ENCODE measurements at regions of chr3 and their contacts with region 1.

Region 1: DNA sequence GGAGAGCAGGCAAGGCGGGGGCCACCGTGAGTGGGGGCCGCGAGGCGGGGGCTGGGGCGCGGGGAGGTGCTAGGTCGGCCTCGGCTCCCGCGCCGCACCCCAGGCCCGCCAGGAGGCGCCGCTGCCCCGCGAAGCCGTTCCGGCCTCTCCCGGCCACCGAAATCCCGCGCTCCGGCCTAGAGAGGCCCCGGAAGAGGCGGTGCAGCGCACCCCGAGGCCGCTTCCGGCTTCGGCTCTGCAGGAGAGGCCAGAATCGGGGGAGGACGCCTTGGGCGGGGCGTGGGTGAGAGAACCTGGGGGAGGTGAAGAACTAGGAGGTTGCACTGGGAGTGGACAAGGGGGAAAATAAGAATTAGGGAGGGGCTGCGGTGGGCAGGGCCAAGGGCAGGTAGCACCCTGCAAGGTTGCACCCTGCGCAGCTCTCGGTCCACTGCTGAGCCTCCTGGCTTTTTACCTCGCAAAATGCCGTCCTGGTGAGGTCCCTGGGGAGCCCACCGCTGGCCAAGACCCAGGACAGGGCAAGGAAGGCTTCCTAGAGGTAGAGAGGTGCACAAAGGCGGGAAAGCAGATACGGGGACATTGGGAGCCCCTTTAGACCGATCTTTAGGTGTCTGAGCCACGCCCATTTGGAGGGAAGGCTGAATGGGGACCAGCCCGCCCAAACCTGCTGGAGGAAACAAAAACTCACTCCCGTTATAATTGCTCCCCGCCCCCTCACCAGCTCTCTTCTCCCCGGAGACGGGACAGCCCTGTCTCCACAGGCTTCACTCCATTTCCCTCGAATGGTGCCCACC is 8.4 kb upstream of the GNAI2 start:
- DNase-seq: peak; percentile 88
- H3K27ac ChIP-seq: peak overlapping the region; percentile 94
- CTCF ChIP-seq: peak; percentile 94

Region 2: DNA sequence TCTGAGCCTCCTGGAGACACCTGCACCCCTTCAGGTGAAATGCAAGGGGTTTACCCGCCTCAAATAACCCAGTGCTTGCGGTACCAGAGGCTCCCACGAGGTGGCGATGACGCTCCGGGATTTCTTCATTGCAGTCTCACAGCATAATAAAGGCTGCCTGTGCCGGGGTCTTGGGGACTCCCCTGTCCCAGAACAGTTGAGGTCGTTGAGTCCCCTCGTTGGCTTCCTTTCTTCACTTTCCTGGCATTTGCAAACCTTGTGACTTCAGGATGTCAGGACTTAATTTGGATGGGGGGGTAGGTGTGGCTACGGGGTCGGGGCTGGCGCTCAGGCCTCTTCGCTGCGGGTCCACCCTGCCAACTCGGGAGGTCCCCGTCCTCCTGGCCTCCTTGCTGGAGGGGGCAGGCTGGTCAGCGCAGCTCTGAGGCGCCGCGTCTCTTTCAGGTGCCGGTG is 34.9 kb before region 1 on chr3:
- CTCF ChIA-PET with region 1: interaction called, 45 read pairs
- POLR2A ChIA-PET with region 1: no interaction called
- DNase-seq: peak; percentile 63
- H3K27ac ChIP-seq: no peak overlapping the region
- CTCF ChIP-seq: peak; percentile 92

Region 3: GRCh38 chr3:50245831-50246516 is 18.4 kb after region 1 on chr3:
- CTCF ChIA-PET with region 1: interaction called, 12 read pairs
- POLR2A ChIA-PET with region 1: no interaction called
- DNase-seq: peak; percentile 69
- H3K27ac ChIP-seq: peak overlapping the region; percentile 100
- CTCF ChIP-seq: peak; percentile 96

Region 4: DNA sequence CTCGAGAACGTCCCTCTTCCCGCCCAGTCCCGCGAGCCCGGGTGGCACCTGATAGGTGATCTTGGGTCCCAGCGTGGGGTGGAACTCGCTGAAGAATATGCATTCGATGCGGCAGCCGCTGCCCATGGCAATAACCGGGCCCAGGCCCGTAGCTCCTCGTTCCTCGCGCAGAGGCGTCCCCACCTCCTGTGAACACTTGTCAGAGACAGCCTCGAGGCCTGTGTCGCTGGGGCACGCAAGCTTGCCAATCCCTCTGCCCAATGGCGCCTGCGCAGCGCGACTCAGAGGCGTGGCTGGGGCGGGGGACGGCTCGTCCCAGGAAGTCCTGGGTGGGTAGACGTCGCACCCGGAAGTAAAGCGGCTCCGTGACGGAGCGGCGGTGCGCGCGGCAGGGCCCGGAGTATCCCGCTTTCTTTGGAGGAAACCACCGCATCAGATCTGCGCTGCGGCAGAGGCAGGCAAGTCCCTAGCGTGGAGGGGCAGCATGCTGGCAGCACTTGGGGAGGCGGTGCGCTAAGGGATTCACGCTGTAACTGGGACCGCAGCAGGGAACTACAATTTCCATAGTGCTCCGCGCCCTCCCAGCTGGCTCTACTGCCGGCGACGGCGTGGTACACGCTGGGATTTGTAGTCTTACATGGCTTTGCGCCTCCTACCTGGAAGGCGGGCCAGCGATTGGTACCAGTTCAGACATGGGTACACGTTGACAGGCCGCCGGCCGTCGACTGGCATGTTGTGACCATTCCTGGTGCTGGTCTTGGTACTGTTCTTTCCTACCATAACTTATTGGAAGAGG is 123.1 kb after region 1 on chr3 and contains the starts of genes CYB561D2 and NPRL2:
- CTCF ChIA-PET with region 1: no interaction called
- POLR2A ChIA-PET with region 1: no interaction called
- DNase-seq: peak; percentile 81
- H3K27ac ChIP-seq: peak within 1 kb of the TSS; percentile 95
- CTCF ChIP-seq: no peak

Region 5: GRCh38 chr3:50450209-50450921 is 222.8 kb after region 1 on chr3:
- CTCF ChIA-PET with region 1: no interaction called
- POLR2A ChIA-PET with region 1: no interaction called
- DNase-seq: no peak
- H3K27ac ChIP-seq: no peak overlapping the region
- CTCF ChIP-seq: no peak

Measured in RWPE1 (cell line).